ENCODE measurements at regions of chr14 and their contacts with region 1.

Region 1: GRCh38 chr14:76456200-76456599 is 80.3 kb downstream of the ESRRB start:
- DNase-seq: no peak

Region 2: GRCh38 chr14:76647697-76648298 is 191.6 kb after region 1 on chr14:
- intact Hi-C with region 1: loop called (anchors 2 kb)
- DNase-seq: no peak

Measured in cardiac septum (tissue), 1 donor.